ENCODE measurements at regions of chr3 and their contacts with region 1.

Region 1: DNA sequence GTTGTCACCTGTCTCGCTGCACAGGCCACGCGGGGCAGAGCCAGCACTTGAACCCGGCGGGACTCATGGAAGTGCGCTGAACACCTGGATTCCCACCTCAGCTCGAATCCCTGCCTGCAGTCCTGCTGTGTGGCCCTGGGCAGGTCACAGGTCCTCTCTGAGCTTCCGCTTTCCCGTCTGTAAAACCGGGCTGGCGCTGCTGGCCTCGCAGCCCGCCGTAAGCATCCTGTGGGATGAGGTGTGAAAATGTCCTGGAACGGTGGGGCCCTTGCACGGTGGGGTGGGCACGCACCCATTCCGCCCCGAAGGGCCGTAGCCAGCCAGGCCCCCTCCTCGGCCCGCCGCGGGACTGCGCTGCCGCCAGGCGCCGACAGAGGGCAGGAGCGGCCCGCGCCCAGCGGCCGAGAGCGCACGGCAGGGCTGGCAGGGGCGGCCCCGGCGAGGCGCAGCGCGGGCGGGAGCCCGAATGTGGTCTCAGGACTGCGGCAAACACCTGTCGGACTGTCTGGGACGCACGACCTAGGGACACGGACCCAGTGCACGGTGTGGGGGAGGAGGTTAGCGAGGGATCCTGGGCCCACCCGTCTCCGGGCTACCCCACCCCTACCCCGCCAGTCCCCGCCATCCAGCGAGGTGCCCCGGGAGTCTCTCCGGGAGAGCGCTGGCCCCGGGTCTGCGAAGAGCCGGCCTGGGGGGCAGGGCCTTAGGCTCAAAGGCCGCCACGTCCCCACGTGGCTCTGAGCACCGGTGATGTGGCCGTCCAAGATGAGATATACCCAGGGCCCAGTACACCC is 40.4 kb downstream of the DNAJB8 start:
- DNase-seq: peak; percentile 46 to 58 (median 57)
- H3K4me3 ChIP-seq: peak overlapping the region in 3 of 7 experiments; percentile 13 to 69 (median 56)
- H3K27ac ChIP-seq: no peak overlapping the region
- H3K4me1 ChIP-seq: peaks cover 0 to 14% (median 11%) of the 10 kb centered on the region in 4 experiments
- H3K27me3 ChIP-seq: peaks cover 0 to 7% (median 0%) of the 10 kb centered on the region in 5 experiments

Region 2: DNA sequence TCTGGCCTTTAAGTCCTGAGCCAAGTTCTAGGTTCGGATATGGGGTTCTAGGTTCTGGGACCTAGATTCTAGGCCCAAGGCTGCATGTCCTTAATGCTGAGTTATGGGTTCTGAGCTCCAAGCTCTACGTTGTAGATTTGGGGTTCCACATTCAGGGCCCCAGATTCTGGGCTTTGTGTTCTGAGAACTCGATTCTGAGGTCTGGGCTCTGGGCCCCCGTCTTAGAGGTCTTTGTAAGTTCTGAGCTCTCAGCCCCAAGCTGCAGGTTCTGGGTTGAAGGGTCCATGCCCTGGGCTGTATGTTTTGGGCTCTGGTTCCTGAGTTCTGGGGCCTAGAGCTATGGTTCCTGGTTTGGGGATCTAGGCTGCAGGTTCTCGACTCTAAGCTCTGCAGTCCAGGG is 50.3 kb after region 1 on chr3:
- CTCF ChIA-PET with region 1: interaction called, 33 read pairs
- POLR2A ChIA-PET with region 1: no interaction called
- DNase-seq: no peak
- H3K4me3 ChIP-seq: peak overlapping the region in 1 of 7 experiments; percentile 19
- H3K27ac ChIP-seq: no peak overlapping the region
- H3K4me1 ChIP-seq: peaks cover 0 to 37% (median 24%) of the 10 kb centered on the region in 4 experiments
- H3K27me3 ChIP-seq: no peaks in the 10 kb centered on the region

Region 3: DNA sequence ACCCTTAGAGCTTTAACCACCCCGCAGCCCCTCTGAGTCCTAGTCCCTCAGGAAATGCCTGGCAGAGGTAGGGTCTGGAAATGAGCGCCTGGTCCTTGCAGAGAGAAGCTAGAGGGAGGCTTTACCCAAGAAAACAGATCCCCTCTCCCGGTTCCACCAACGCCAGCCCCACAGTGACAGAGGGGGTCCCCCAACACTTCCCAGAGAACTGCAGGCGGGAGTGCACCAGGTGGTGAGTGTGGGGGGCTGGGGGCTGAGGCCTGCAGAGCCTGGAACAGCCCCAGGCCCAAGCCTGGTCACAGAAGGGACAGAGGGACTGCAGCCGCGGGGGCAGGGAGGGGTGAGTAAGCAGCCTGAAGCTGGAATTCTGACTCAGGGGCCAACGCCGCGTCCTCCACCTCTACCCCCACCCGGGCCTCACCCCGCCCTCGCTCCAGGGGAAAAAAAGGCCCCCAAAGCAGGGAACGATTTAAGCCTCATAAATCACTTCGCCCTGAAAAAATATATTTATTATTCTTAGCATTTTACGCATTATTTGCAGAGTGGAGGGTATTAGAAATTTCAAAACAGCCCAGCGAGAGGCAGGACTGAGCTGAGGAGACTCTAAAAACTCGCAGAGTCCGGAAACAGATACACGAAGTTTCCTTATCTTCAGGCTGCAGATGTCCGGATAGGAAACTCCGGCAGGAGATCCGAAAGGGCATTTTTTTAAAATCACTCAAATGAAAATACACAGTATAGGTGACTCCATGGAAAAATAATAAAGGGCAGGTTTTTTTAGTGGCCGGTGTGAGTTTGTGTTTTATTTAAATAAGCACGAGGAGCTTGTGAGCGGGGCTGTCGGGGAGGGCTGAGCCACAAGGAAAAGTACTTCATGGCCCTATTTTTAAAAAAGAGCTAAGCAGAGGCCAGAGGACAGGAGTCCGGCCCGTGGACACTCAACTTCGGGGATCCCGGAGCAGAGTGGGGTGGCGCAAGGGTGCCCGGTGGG is 56.6 kb after region 1 on chr3:
- CTCF ChIA-PET with region 1: interaction called, 44 read pairs
- POLR2A ChIA-PET with region 1: interaction called, 4 read pairs
- DNase-seq: peak; percentile 98 to 99 (median 99)
- H3K4me3 ChIP-seq: peak overlapping the region in 6 of 7 experiments; percentile 54 to 98 (median 88)
- H3K27ac ChIP-seq: peak overlapping the region; percentile 83 to 93
- H3K4me1 ChIP-seq: peaks cover 6 to 74% (median 67%) of the 10 kb centered on the region in 4 experiments
- H3K27me3 ChIP-seq: no peaks in the 10 kb centered on the region

Region 4: GRCh38 chr3:128487813-128488635 is 61.7 kb after region 1 on chr3:
- CTCF ChIA-PET with region 1: interaction called, 44 read pairs
- POLR2A ChIA-PET with region 1: interaction called, 4 read pairs
- DNase-seq: peak; percentile 66 to 79 (median 70)
- H3K4me3 ChIP-seq: peak overlapping the region; percentile 70 to 98 (median 87)
- H3K27ac ChIP-seq: peak overlapping the region; percentile 81 to 93
- H3K4me1 ChIP-seq: peaks cover 3 to 95% (median 71%) of the 10 kb centered on the region in 4 experiments
- H3K27me3 ChIP-seq: peaks cover 0 to 11% (median 0%) of the 10 kb centered on the region in 5 experiments

Region 5: DNA sequence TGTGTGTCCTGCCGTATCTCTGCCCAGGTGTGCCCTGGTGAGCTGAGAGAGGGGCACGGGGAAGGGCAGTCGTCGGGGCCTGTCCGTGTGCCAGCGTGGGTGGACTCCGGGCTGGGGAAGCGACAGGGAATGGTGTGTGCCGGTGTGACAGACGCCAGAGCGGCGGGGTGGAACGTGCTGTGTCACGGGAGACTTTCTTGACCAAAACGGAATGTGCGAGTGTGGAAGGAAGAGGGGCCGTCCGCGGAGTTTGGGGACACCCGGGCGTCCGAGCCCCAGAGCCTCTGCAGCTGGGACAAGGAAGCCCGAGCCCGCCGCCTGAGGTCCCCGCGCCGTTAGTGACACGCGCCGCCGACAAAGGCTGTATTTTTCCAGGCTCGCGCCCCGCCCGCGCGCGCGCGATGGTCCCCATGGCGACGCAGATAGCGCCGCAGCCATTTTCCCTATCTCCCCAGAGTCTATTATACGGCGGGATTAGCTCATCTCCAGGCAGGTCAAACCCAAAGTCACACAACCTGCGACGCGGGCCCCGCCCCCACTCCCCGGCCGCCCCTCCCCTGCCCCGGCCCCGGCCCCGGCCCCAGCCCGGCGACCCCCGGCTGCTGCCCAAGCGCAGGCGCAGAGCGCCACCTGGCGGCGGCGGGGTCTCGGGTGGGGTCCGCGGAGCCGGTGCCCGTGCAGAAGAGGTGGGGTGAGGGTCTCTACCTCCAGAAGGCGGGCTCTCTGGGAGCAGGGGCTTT is 71.2 kb after region 1 on chr3:
- CTCF ChIA-PET with region 1: interaction called, 63 read pairs
- POLR2A ChIA-PET with region 1: interaction called, 3 read pairs
- DNase-seq: peak; percentile 72 to 86 (median 83)
- H3K4me3 ChIP-seq: peak overlapping the region; percentile 33 to 82 (median 60)
- H3K27ac ChIP-seq: peak overlapping the region in 1 of 2 experiments; percentile 25
- H3K4me1 ChIP-seq: peaks cover 2 to 50% (median 30%) of the 10 kb centered on the region in 4 experiments
- H3K27me3 ChIP-seq: peaks cover 0 to 2% (median 0%) of the 10 kb centered on the region in 5 experiments

Region 6: DNA sequence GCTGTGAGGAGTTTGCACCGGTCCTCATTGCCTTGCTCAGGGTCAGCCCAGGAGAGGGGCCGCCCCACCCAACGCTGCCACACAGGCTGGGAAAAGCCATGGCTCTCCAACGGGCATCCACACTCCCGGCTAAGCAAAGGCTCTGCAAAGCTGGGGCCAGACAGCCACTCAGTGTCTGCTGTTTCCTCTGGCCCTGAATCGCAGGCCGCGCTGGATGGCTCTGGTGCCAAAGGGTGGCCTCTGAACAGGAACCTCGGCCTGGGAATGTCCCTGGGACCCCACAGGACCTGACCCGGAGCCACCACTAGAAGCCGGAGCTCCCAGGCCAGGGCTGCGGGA is 181.4 kb after region 1 on chr3:
- CTCF ChIA-PET with region 1: interaction called, 15 read pairs
- POLR2A ChIA-PET with region 1: no interaction called
- DNase-seq: no peak
- H3K4me3 ChIP-seq: peak overlapping the region; percentile 23 to 76 (median 54)
- H3K27ac ChIP-seq: no peak overlapping the region
- H3K4me1 ChIP-seq: peaks cover 7 to 63% (median 29%) of the 10 kb centered on the region in 4 experiments
- H3K27me3 ChIP-seq: no peaks in the 10 kb centered on the region